Activated T-helper 1 cell treated with anti-CD3 and anti-CD28 coated beads, Interleukin-12 subunit alpha, Interleukin-12 subunit beta, Interleukin-2, Interleukin-4 antibody, amounts not matched to agents 30 ng/mL and 10 ng/mL and 1 ng/mL, durations not matched to agents 14 hours and 24 hours and 36 hours (primary cell): ENCODE measurements at regions of chrX and their contacts with region 1.

Region 1: DNA sequence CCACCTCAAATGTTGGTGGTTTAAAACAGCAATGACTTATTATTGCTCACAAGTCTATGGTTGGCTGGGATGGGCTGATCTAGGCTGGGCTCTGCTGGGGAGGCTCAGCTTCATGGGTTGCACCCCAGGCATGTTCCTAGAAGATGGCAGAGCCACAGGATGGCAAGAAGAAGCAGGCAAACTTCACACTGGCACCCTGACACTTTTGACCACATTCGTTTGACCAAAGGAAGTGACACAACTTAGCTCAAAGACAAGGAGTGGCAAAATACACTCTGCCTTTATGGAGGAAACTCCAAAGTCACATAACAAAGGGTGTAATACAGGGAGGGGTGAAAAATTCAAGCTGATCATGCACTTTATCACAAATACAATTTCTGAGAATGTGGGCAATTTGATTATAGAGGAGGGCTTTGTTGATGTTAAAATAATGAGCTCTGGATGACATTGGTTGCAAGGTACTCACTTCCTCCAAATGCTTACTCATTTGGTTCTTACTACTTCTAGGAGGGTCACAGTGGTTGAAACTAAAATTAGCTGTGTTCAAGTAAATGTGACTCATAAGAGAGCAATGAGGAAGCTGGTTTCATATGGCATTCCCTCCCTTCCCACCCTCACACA is 249.2 kb upstream of the RPS6KA3 start:
- DNase-seq: peak; percentile 14
- H3K4me3 Mint-ChIP-seq: peak overlapping the region; percentile 45
- H3K27ac Mint-ChIP-seq: peak overlapping the region; percentile 92
- H3K4me1 Mint-ChIP-seq: peaks cover 58% of the 10 kb centered on the region
- H3K27me3 Mint-ChIP-seq: peaks cover 6% of the 10 kb centered on the region

Region 2: GRCh38 chrX:20224814-20225487 is 291.0 kb before region 1 on chrX:
- intact Hi-C with region 1: loop called (anchors 10 kb)
- DNase-seq: no peak
- H3K4me3 Mint-ChIP-seq: no peak overlapping the region
- H3K27ac Mint-ChIP-seq: peak overlapping the region; percentile 10
- H3K4me1 Mint-ChIP-seq: peaks cover 21% of the 10 kb centered on the region
- H3K27me3 Mint-ChIP-seq: no peaks in the 10 kb centered on the region

Region 3: GRCh38 chrX:20333672-20334071 is 182.3 kb before region 1 on chrX:
- intact Hi-C with region 1: loop called (anchors 5 kb)
- DNase-seq: no peak
- H3K4me3 Mint-ChIP-seq: no peak overlapping the region
- H3K27ac Mint-ChIP-seq: no peak overlapping the region
- H3K4me1 Mint-ChIP-seq: peaks cover 14% of the 10 kb centered on the region
- H3K27me3 Mint-ChIP-seq: no peaks in the 10 kb centered on the region

Region 4: DNA sequence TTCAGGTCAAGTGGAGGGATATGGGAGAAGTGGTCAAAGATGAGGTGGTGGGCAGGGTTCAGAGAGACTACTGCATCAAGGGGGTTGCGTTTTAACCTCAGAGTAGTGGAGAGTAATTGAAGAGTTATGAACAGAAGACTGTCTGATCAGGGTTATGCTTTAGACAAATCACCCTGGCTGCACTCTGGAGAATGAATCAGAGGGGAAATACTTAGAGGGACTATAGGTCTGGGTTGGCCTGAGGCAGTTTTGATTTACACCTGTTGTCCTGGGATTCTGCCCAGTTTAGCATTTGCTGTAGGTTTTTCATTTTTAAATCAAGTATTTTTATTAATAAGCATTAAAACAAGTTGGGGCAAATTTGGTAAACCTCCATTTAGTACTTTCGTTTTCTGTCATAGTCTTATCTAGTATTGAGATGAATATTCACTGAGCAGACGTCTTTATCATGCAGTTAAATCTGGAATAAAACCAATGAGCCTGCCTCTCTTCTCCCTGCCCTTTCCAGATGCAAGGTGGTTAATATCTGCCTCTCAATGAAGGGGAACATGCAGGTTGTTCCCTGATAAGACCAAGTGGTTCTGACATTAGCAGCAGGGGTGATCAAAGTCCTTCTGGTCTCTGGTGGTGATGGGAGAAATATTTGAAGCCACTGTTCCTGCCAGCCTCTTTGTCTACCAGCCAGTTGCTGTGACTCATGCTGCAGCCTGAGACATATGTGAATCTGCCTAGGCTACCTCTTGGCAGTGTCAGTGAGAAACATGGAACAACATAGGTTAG is 133.2 kb before region 1 on chrX:
- intact Hi-C with region 1: loop called (anchors 2 kb)
- DNase-seq: no peak
- H3K4me3 Mint-ChIP-seq: no peak overlapping the region
- H3K27ac Mint-ChIP-seq: no peak overlapping the region
- H3K4me1 Mint-ChIP-seq: peaks cover 26% of the 10 kb centered on the region
- H3K27me3 Mint-ChIP-seq: no peaks in the 10 kb centered on the region

Region 5: DNA sequence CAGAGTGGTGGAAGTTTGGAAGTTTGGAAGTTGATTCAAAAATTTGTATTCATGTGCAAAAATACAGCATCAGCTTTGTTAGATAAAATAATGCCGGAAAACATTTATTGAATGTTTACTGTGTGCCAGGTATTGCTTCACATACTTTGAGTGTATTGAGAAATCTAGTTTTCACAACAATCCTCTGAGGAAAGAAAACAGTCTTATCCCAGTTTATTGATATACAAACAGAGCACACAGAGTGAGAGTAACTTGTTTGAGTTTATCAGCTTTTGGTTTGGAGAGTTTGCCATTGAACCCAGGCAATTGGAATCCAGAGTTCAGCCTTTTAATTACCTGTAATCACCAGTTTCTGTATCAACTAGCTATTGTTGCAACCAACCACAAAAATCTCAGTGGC is 122.0 kb before region 1 on chrX:
- intact Hi-C with region 1: no loop called
- DNase-seq: no peak
- H3K4me3 Mint-ChIP-seq: no peak overlapping the region
- H3K27ac Mint-ChIP-seq: no peak overlapping the region
- H3K4me1 Mint-ChIP-seq: peaks cover 3% of the 10 kb centered on the region
- H3K27me3 Mint-ChIP-seq: peaks cover 4% of the 10 kb centered on the region

Region 6: DNA sequence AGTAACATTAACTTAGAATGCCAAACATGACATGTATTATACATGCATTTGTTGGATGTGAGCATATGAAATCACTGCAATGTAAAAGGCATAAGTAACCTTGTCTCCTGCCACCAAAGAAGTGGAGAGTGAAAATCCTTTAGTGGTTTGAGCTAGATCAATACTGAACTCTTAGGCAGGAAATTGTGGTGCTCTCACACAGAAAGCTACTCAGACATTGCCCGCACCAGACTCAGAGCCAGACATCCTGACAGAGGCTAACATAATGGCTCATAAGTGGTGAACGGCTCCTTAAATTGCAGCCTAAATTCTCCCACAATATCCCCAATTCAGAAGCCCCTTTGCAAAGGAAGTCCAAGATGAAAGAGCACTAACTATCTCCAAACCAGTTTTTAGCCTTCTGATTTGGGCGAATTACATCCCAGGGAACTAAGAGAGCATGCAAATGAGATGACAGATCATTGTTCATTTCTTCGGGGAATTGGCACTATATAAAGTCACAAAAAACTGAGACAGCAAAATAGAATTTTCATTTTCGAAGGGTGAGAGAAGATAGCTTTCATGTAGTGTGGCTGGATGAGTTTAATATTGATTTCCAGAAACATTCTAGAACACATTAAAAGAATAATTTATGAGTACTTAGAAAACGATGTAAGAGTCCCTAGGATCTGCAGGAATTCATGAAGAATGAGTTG is 15.6 kb before region 1 on chrX:
- intact Hi-C with region 1: loop called (anchors 2 kb)
- DNase-seq: no peak
- H3K4me3 Mint-ChIP-seq: no peak overlapping the region
- H3K27ac Mint-ChIP-seq: peak overlapping the region; percentile 51
- H3K4me1 Mint-ChIP-seq: peaks cover 31% of the 10 kb centered on the region
- H3K27me3 Mint-ChIP-seq: peaks cover 14% of the 10 kb centered on the region

Region 7: GRCh38 chrX:20547611-20548051 is 31.7 kb after region 1 on chrX:
- intact Hi-C with region 1: loop called (anchors 1 kb)
- DNase-seq: no peak
- H3K4me3 Mint-ChIP-seq: no peak overlapping the region
- H3K27ac Mint-ChIP-seq: no peak overlapping the region
- H3K4me1 Mint-ChIP-seq: peaks cover 6% of the 10 kb centered on the region
- H3K27me3 Mint-ChIP-seq: peaks cover 3% of the 10 kb centered on the region

Region 8: GRCh38 chrX:21839334-21840192 is 1323.6 kb after region 1 on chrX and contains the start of gene MBTPS2:
- intact Hi-C with region 1: loop called (anchors 5 kb)
- DNase-seq: peak; percentile 73
- H3K4me3 Mint-ChIP-seq: peak within 1 kb of the TSS; percentile 88
- H3K27ac Mint-ChIP-seq: peak within 1 kb of the TSS; percentile 90
- H3K4me1 Mint-ChIP-seq: peaks cover 14% of the 10 kb centered on the region
- H3K27me3 Mint-ChIP-seq: no peaks in the 10 kb centered on the region
- total RNA-seq, gene MBTPS2: 10.5 and 11.3 TPM in 2 replicates